ENCODE measurements at regions of chr2 and their contacts with region 1.

Region 1: DNA sequence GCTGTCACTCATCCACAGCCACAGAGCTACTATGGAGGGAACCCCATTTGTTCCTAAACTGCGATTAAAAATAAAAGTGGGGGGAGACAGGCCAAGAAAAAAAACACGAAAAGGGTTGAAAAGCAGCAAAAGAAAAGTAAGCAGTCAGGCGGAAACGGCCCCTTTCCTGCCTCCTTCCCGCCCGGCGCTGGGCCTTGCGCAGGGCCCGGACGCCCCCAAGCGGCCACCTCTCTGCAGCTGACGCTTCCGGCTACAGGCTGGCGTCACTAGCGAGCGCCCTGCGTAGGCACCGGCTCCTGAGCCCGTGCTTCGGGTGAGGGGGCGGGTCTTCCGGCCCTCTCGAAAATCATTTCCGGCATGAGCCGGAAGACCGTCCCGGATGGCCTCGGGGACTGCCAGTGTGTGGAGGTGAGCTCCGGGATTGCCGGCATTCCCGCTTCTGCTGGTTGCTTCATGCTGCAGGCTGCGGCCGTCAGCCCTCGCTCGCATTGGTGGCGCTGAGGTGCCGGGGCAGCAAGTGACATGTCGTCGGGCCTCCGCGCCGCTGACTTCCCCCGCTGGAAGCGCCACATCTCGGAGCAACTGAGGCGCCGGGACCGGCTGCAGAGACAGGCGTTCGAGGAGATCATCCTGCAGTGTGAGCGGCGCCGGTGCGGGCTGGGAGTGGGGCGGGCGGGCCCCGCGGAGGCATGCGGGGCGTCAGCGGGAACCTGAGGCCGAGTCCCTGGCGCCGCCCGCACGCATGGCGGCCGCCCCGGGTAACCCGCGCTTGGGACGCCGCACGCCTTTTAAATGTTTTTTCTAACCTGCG is at the start of gene ATG16L1:
- DNase-seq: peak; percentile 98
- H3K4me3 ChIP-seq: peak within 1 kb of the TSS; percentile 73 to 97 (median 92)
- H3K27ac ChIP-seq: peak within 1 kb of the TSS; percentile 82 to 95 (median 92)
- H3K4me1 ChIP-seq: peaks cover 18 to 46% (median 32%) of the 10 kb centered on the region in 4 donors
- H3K27me3 ChIP-seq: no peaks in the 10 kb centered on the region
- CTCF ChIP-seq: peak; percentile 90 to 97 (median 97)
- EP300 ChIP-seq: no peak
- POLR2A ChIP-seq: peak; percentile 53
- total RNA-seq, gene ATG16L1: 24.7 to 40.3 (median 30.2) TPM

Region 2: GRCh38 chr2:232609607-232610006 is 641.9 kb before region 1 on chr2:
- intact Hi-C with region 1: loop called (anchors 5 kb)
- DNase-seq: no peak
- H3K4me3 ChIP-seq: no peak overlapping the region
- H3K27ac ChIP-seq: no peak overlapping the region
- H3K4me1 ChIP-seq: peaks cover 4 to 11% (median 9%) of the 10 kb centered on the region in 4 donors
- H3K27me3 ChIP-seq: no peaks in the 10 kb centered on the region
- CTCF ChIP-seq: no peak
- EP300 ChIP-seq: no peak
- POLR2A ChIP-seq: no peak

Region 3: DNA sequence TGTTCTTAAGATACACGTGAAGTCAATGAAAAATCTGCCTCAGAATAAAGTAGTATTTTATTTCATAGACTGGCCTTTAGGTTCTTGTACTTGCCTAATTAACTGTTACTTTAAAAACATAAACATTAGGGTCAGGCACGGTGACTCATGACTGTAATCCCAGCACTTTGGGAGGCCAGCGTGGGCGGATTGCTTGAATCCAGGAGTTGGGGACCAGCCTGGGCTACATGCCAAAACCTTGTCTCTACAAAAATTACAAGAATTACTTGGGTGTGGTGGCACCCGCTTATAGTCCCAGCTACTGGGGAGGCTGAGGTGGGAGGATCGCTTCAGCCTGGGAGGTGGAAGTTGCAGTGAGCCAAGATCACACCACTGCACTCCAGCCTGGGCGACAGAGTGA is 397.4 kb before region 1 on chr2:
- intact Hi-C with region 1: loop called (anchors 5 kb)
- DNase-seq: no peak
- H3K4me3 ChIP-seq: no peak overlapping the region
- H3K27ac ChIP-seq: no peak overlapping the region
- H3K4me1 ChIP-seq: peaks cover 5 to 15% (median 13%) of the 10 kb centered on the region in 4 donors
- H3K27me3 ChIP-seq: no peaks in the 10 kb centered on the region
- CTCF ChIP-seq: no peak
- EP300 ChIP-seq: no peak
- POLR2A ChIP-seq: no peak

Region 4: DNA sequence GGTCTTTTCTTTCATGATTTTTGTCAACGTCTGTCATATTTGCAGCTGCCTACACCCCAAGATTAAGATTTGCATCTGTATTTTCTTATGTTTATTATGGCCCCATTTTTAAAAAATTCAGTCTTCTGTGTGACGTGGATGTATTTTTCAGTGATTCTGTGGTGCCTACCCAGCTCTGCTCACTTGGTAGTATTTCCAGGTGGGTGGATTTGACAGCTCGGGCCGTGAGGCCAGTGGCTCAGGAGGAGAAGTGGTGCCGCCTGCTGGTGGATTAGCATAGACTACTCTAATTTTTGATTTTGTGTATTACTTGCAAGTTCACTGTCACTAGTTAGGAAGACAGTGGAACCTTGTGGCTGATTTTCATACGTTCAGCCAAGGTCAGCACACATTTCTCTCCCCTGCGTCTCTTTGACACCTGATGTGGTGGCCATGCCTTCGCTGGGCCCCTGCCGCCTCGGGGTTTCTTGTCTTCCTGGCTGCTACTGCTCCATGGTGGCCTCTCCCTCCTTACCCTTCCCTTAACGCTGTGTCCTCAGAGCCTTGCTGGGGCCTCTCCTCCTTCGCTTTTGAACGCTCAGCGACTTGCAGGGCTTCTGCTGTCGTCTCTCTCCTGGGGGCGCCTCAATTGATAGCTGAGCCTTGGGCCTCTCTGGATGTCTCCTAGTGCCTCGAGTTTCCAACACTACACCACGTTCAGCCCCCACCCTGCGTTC is 192.1 kb after region 1 on chr2:
- intact Hi-C with region 1: loop called (anchors 5 kb)
- DNase-seq: peak; percentile 95
- H3K4me3 ChIP-seq: no peak overlapping the region
- H3K27ac ChIP-seq: peak overlapping the region in 1 of 4 donors; percentile 16
- H3K4me1 ChIP-seq: peaks cover 7 to 16% (median 11%) of the 10 kb centered on the region in 4 donors
- H3K27me3 ChIP-seq: no peaks in the 10 kb centered on the region
- CTCF ChIP-seq: peak; percentile 83 to 85 (median 85)
- EP300 ChIP-seq: no peak
- POLR2A ChIP-seq: no peak